MCF 10A (cell line): ENCODE measurements at regions of chr12 and their contacts with region 1.

Region 1: DNA sequence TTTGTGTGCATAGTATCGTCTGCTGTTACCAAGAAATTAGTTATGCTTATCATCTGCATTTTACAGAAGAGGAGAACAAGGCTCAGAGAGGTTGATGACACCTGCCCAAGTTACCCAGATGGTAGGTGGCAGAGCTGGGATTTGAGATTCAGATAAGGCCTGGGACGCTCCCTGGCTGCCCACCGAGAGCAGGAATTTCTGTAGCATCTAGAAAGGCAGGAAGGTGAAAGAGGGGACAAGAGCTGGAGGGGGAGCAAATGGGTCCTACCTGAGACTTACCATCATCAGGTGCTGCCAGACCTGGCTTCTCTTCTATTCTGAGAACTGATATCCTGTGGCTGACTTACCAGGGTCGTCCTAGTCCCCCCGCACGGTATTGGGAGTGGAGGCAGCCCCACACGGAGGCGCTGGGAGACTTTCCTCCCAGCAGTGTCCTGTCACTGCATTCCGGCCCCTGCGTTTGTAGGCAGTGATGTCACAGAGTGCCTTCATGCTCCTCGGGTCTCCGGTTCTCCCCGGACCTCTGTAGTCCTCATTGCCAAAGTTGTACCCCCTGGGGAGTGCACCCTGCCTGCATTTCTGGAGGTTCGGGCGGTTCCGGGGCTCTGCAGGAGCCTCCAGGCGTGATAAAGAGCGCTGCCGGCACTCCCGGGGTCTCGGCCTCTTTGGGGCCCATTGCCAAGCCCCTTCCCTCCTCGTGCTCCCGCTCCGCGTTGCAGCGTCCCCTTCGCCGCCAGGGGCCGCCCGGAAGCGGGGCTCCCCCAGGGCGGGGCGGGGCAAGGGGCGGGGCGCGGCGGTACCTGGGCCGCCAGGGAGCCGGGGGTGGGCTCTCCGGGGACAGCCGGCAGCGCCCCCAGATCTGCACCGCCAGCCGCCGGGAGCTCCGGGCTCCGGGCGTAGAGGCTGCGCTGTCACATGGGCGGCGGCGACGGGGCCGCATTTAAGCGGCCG is at the start of gene CABP1:
- DNase-seq: no peak
- H3K4me3 Mint-ChIP-seq: peak within 1 kb of the TSS; percentile 68
- H3K27ac Mint-ChIP-seq: no peak within 1 kb of the TSS
- H3K4me1 Mint-ChIP-seq: peaks cover 6% of the 10 kb centered on the region
- H3K27me3 Mint-ChIP-seq: peaks cover 23% of the 10 kb centered on the region
- CTCF ChIP-seq: no peak
- total RNA-seq, gene CABP1: not detected in 2 replicates

Region 2: GRCh38 chr12:120598674-120599463 is 41.2 kb before region 1 on chr12:
- CTCF ChIA-PET with region 1: no interaction called
- POLR2A ChIA-PET with region 1: no interaction called
- intact Hi-C with region 1: loop called (anchors 5 kb)
- DNase-seq: peak; percentile 61
- H3K4me3 Mint-ChIP-seq: no peak overlapping the region
- H3K27ac Mint-ChIP-seq: no peak overlapping the region
- H3K4me1 Mint-ChIP-seq: no peaks in the 10 kb centered on the region
- H3K27me3 Mint-ChIP-seq: peaks cover 11% of the 10 kb centered on the region
- CTCF ChIP-seq: no peak

Region 3: DNA sequence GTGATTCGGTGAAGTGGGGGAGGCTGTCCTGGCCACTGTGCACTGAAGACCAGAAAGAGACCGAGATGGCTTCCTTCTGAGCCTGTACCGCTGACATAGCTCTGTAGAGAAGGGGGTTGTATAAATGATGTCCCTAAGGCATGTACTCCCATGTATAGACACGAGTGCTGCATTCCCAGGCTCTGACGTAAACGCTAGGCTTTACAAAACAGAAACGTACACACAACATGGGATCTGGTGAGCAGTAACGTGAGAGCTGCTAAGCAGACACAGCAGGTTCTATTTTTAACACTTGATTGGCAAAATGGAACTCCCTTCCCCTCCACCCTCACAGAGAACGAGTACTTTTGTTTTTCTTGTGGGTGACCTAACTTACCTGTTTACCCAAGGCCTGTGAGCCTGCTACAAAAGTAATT is 121.5 kb after region 1 on chr12:
- CTCF ChIA-PET with region 1: no interaction called
- POLR2A ChIA-PET with region 1: no interaction called
- intact Hi-C with region 1: no loop called
- DNase-seq: no peak
- H3K4me3 Mint-ChIP-seq: no peak overlapping the region
- H3K27ac Mint-ChIP-seq: no peak overlapping the region
- H3K4me1 Mint-ChIP-seq: no peaks in the 10 kb centered on the region
- H3K27me3 Mint-ChIP-seq: no peaks in the 10 kb centered on the region
- CTCF ChIP-seq: no peak